ENCODE measurements at regions of chr4 and their contacts with region 1.

Region 1: GRCh38 chr4:48071121-48071612 is 54.6 kb downstream of the NIPAL1 start:
- DNase-seq: peak; percentile 78 to 87
- H3K4me3 ChIP-seq: no peak overlapping the region
- H3K4me3 Mint-ChIP-seq: peak overlapping the region; percentile 35
- H3K27ac Mint-ChIP-seq: peak overlapping the region; percentile 84
- H3K4me1 ChIP-seq: peaks cover 44% of the 10 kb centered on the region
- H3K4me1 Mint-ChIP-seq: peaks cover 21% of the 10 kb centered on the region
- H3K27me3 ChIP-seq: no peaks in the 10 kb centered on the region
- H3K27me3 Mint-ChIP-seq: no peaks in the 10 kb centered on the region
- CTCF ChIP-seq: peak in 1 of 2 experiments; percentile 10

Region 2: GRCh38 chr4:48033825-48034413 is 37.2 kb before region 1 on chr4:
- CTCF ChIA-PET with region 1: interaction called, 4 read pairs
- POLR2A ChIA-PET with region 1: no interaction called
- intact Hi-C with region 1: loop called (anchors 1 kb)
- DNase-seq: peak in 1 of 2 experiments; percentile 57
- H3K4me3 ChIP-seq: no peak overlapping the region
- H3K4me3 Mint-ChIP-seq: peak overlapping the region; percentile 8
- H3K27ac Mint-ChIP-seq: peak overlapping the region; percentile 23
- H3K4me1 ChIP-seq: peaks cover 29% of the 10 kb centered on the region
- H3K4me1 Mint-ChIP-seq: peaks cover 21% of the 10 kb centered on the region
- H3K27me3 ChIP-seq: no peaks in the 10 kb centered on the region
- H3K27me3 Mint-ChIP-seq: no peaks in the 10 kb centered on the region
- CTCF ChIP-seq: peak; percentile 38 to 53

Region 3: GRCh38 chr4:48042979-48043461 is 28.1 kb before region 1 on chr4:
- CTCF ChIA-PET with region 1: interaction called, 8 read pairs
- POLR2A ChIA-PET with region 1: no interaction called
- intact Hi-C with region 1: loop called (anchors 1 kb)
- DNase-seq: peak in 1 of 2 experiments; percentile 40
- H3K4me3 ChIP-seq: no peak overlapping the region
- H3K4me3 Mint-ChIP-seq: peak overlapping the region; percentile 50
- H3K27ac Mint-ChIP-seq: peak overlapping the region; percentile 93
- H3K4me1 ChIP-seq: peaks cover 37% of the 10 kb centered on the region
- H3K4me1 Mint-ChIP-seq: peaks cover 18% of the 10 kb centered on the region
- H3K27me3 ChIP-seq: no peaks in the 10 kb centered on the region
- H3K27me3 Mint-ChIP-seq: no peaks in the 10 kb centered on the region
- CTCF ChIP-seq: no peak

Region 4: DNA sequence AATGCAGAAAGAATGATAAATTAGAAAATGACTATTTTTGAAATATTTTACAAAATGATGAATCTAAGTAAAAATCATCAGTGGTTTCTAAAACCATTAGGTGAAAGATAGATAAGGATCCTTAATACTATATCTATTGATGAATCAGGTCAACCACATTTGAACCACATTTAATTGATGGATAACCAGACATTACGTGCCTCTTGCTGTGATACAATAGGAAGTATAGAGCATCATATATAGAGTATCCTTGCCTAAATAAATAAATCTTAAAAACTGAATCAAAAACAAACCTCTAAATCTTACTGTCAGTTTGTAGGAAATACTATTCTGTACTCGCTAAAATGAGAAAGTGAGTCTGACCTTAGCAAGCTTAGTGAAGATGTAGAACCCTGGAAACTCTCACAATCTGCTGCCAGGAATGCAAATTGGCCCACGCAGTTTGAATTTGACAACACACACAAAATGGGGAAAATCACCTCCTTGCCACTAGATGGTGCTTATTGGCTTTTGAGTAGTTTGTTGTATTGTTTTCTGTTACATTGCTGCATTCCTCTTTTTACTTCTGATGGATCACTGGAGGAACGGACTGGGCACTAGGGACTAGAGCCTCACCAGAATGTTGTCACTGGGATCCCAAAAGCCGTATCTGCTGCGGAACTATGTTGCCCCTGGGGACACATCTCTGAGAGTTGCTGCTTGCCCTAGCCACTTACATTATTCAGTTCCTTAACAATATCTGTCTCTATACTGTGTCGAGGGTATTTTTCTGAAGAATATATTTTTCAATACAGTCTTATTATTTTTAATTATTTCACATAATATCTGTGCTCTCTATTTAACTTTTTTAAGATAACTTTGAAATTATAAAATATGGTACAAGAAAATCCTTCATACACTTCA is 244.8 kb after region 1 on chr4:
- CTCF ChIA-PET with region 1: no interaction called
- POLR2A ChIA-PET with region 1: no interaction called
- intact Hi-C with region 1: no loop called
- DNase-seq: peak in 1 of 2 experiments; percentile 50
- H3K4me3 ChIP-seq: no peak overlapping the region
- H3K4me3 Mint-ChIP-seq: no peak overlapping the region
- H3K27ac Mint-ChIP-seq: no peak overlapping the region
- H3K4me1 ChIP-seq: no peaks in the 10 kb centered on the region
- H3K4me1 Mint-ChIP-seq: peaks cover under 1% of the 10 kb centered on the region
- H3K27me3 ChIP-seq: no peaks in the 10 kb centered on the region
- H3K27me3 Mint-ChIP-seq: no peaks in the 10 kb centered on the region
- CTCF ChIP-seq: peak; percentile 59 to 60

Measured in Caco-2 (cell line).